ENCODE measurements at regions of chr5 and their contacts with region 1.

Region 1: DNA sequence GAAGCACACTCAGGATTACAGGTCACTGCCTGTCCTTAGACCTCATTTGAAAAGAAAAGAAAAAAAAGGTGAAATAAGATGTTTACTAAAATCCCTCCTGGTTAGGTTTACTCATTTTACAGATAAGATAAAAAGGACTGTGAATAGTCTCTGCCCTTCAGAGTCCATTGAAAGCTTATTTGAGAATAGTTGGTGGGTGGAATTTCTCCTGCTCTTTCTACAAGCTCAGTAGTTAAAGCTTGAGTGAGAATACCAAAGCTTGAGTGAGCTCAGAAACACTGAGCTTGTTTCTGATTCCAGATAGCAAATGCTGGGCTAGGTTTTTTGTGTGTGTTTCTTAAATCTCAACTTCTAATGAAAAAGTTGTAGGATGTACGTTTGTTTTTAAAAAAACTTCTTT is 106.7 kb downstream of the SLF1 start:
- DNase-seq: no peak

Region 2: DNA sequence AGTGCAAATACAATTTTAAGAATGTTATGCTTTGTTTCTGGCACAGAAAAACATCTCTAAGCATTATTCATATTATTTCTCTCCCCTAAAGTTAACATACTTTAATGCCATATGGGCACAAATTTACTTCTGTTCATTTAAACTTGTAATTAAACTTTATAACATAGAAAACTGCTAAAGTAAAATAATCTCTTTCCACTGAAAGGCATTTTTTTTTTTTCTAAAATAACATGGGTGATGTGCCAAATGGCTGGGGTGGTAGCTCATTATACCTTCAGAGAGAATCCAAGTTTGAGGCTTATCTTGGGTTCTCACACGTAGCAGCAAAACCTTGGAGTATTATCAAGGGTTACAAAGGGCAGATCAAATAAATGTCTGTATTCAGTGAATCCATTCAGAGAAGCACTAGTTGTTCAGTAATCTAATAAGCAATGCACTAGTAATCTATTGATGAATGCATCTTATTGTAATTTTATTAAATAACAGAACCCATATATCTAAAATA is 726.1 kb before region 1 on chr5:
- intact Hi-C with region 1: no loop called
- DNase-seq: no peak

Region 3: GRCh38 chr5:94407023-94407422 is 318.1 kb before region 1 on chr5:
- intact Hi-C with region 1: loop called in 1 of 2 experiments (anchors 10 kb)
- DNase-seq: no peak